ENCODE measurements at regions of chr4 and their contacts with region 1.

Region 1: GRCh38 chr4:30870513-30870912 is 150.3 kb downstream of the PCDH7 start:
- DNase-seq: no peak
- H3K4me3 ChIP-seq: no peak overlapping the region
- H3K27ac ChIP-seq: peak overlapping the region in 2 of 4 donors; percentile 15 to 33
- H3K4me1 ChIP-seq: peaks cover 0 to 16% (median 0%) of the 10 kb centered on the region in 4 donors
- H3K27me3 ChIP-seq: no peaks in the 10 kb centered on the region
- CTCF ChIP-seq: no peak
- EP300 ChIP-seq: no peak
- POLR2A ChIP-seq: no peak

Region 2: GRCh38 chr4:30719460-30720020 is 151.0 kb before region 1 on chr4:
- in situ Hi-C with region 1: no loop called
- intact Hi-C with region 1: loop called (anchors 10 kb)
- DNase-seq: peak; percentile 40
- H3K4me3 ChIP-seq: peak overlapping the region; percentile 45 to 73 (median 54)
- H3K27ac ChIP-seq: peak overlapping the region; percentile 67 to 89 (median 80)
- H3K4me1 ChIP-seq: peaks cover 4 to 63% (median 23%) of the 10 kb centered on the region in 4 donors
- H3K27me3 ChIP-seq: peaks cover 72% of the 10 kb centered on the region
- CTCF ChIP-seq: no peak
- EP300 ChIP-seq: no peak
- POLR2A ChIP-seq: no peak

Region 3: GRCh38 chr4:30808276-30808675 is 62.2 kb before region 1 on chr4:
- in situ Hi-C with region 1: no loop called
- intact Hi-C with region 1: no loop called
- DNase-seq: no peak
- H3K4me3 ChIP-seq: no peak overlapping the region
- H3K27ac ChIP-seq: no peak overlapping the region
- H3K4me1 ChIP-seq: no peaks in the 10 kb centered on the region
- H3K27me3 ChIP-seq: no peaks in the 10 kb centered on the region
- CTCF ChIP-seq: no peak
- EP300 ChIP-seq: no peak
- POLR2A ChIP-seq: no peak

Region 4: GRCh38 chr4:31045724-31046318 is 175.3 kb after region 1 on chr4:
- in situ Hi-C with region 1: no loop called
- intact Hi-C with region 1: no loop called
- DNase-seq: peak; percentile 9
- H3K4me3 ChIP-seq: no peak overlapping the region
- H3K27ac ChIP-seq: no peak overlapping the region
- H3K4me1 ChIP-seq: peaks cover 0 to 3% (median 0%) of the 10 kb centered on the region in 4 donors
- H3K27me3 ChIP-seq: no peaks in the 10 kb centered on the region
- CTCF ChIP-seq: peak in 3 of 5 experiments; percentile 28 to 47 (median 37)
- EP300 ChIP-seq: no peak
- POLR2A ChIP-seq: no peak